Activated naive CD4-positive, alpha-beta T cell treated with anti-CD3 and anti-CD28 coated beads for 36 hours (primary cell): ENCODE measurements at regions of chr4 and their contacts with region 1.

Region 1: DNA sequence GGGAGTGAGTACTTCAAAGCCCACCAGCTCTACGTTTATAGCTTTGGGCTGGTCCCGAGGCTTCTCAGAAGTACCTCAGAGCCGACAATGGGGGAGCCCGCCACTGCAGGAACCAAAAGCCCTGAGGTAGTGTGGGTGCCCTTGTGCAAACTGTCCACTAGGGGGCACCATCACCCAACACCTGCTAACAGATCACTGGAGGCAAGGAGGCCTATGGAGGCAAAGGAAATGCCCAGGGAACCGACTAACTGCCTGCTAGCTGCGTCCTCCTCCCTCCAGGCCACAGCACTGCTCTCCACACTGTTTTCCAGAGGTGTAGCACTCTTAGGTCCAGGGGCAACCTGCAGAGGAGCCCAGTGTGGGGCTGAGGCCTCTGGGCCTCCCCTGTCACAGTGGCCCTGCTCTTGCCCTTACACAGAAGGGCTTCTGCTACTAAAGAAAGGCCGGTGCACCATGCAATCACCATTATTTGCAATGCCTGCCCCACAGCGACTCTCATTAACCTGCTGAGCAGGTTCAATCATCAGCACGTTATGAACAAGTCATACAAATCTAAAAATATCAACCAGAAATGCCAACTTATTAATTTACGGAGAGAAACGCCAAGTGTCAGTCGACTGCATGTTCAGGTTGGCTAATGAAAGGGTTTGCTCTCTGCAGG is 159.1 kb downstream of the NSUN7 start:
- DNase-seq: peak; percentile 89
- H3K4me3 Mint-ChIP-seq: peak overlapping the region; percentile 22
- H3K27ac Mint-ChIP-seq: peak overlapping the region; percentile 90
- H3K4me1 Mint-ChIP-seq: peaks cover 41% of the 10 kb centered on the region
- H3K27me3 Mint-ChIP-seq: no peaks in the 10 kb centered on the region

Region 2: DNA sequence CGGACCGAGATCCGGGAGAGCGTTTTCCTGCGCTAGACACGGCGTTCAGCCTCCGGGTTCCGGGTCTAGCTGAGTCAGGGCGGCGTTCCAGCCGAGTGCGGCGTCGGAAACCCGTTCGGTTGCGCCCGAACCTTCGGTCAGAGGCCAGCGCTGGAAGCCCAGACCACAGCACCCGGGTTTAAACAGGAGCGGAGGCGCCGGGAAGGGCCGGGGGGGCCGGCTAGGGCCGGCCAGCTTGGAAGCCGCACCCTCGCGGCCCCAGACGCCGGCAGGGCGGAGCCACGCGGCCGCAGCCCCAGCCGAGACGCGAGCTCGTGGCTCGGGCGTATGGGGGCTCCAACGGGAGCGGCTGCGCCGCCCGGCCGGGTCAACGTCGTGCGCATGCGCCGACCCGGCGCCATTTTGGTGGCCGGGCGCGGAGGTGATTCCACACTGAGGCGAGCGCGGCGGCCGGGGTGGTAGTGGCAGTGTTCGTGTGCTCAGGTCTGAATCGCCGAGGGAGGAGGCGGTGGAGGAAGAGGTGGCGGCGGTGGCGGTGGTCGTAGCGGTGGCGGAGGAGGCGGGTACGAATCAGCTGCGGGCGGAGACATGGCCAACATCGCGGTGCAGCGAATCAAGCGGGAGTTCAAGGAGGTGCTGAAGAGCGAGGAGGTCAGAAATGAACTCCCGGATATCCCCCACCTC is 1211.0 kb before region 1 on chr4 and contains the start of gene UBE2K:
- CTCF ChIA-PET with region 1: no interaction called
- intact Hi-C with region 1: loop called (anchors 2 kb)
- DNase-seq: peak; percentile 85
- H3K4me3 Mint-ChIP-seq: peak within 1 kb of the TSS; percentile 98
- H3K27ac Mint-ChIP-seq: peak within 1 kb of the TSS; percentile 98
- H3K4me1 Mint-ChIP-seq: peaks cover 32% of the 10 kb centered on the region
- H3K27me3 Mint-ChIP-seq: no peaks in the 10 kb centered on the region
- total RNA-seq, gene UBE2K: 60.6 to 69.5 TPM

Region 3: DNA sequence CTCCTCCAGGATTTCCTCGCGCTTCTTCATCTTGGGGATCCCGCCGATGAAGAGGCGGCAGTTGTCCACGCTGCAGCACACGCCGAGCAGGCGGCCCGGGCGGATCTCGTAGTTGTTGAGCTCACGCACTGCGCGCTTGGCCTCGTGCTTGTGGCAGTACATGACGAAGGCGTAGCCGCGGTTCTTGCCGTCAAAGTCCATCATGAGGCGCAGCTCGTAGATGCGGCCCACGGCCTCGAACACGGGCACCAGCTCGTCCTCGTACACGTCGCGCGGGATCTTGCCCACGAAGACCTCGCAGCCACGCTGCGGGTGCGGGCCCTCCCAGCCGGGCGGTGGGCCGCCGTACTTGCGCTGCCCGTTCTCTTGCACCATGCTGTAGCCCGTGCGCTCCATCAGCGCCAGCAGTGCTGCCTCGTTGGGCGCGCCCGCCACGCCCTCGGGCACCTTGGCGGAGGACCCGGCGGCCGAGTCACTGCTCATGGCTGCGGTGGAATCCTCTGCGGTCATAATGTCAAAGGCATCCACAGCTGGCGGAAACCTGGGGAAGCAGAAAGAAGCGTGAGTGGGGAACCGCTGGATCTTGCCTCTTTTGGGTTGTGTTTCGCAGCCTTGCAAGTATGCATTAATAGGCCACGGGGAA is 470.3 kb before region 1 on chr4:
- CTCF ChIA-PET with region 1: no interaction called
- intact Hi-C with region 1: loop called (anchors 1 kb)
- DNase-seq: no peak
- H3K4me3 Mint-ChIP-seq: no peak overlapping the region
- H3K27ac Mint-ChIP-seq: no peak overlapping the region
- H3K4me1 Mint-ChIP-seq: peaks cover 36% of the 10 kb centered on the region
- H3K27me3 Mint-ChIP-seq: no peaks in the 10 kb centered on the region

Region 4: GRCh38 chr4:40719008-40719623 is 189.7 kb before region 1 on chr4:
- CTCF ChIA-PET with region 1: no interaction called
- intact Hi-C with region 1: loop called (anchors 1 kb)
- DNase-seq: peak; percentile 27
- H3K4me3 Mint-ChIP-seq: no peak overlapping the region
- H3K27ac Mint-ChIP-seq: no peak overlapping the region
- H3K4me1 Mint-ChIP-seq: peaks cover 8% of the 10 kb centered on the region
- H3K27me3 Mint-ChIP-seq: no peaks in the 10 kb centered on the region

Region 5: GRCh38 chr4:40924096-40924792 is 15.4 kb after region 1 on chr4:
- CTCF ChIA-PET with region 1: interaction called, 102 read pairs
- intact Hi-C with region 1: loop called (anchors 1 kb)
- DNase-seq: peak; percentile 92
- H3K4me3 Mint-ChIP-seq: no peak overlapping the region
- H3K27ac Mint-ChIP-seq: peak overlapping the region; percentile 72
- H3K4me1 Mint-ChIP-seq: peaks cover 10% of the 10 kb centered on the region
- H3K27me3 Mint-ChIP-seq: peaks cover 11% of the 10 kb centered on the region

Region 6: DNA sequence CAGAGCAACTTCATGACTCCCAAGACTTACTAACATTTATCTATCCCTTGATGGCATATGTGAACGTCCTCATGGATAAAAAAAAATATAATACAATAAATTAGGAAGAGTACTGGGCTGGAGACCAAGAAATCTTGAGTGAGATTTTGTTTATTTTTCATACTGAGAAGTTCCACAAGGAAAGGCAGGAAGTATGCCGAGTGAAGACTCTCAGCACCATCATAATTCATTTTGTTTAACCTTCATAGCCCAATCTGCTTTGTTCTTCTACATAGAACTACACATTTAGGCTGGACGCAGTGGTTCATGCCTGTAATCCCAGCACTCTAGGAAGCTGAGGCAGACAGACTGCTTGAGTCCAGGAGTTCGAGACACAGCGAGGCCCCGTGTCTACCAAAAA is 39.2 kb after region 1 on chr4:
- CTCF ChIA-PET with region 1: no interaction called
- intact Hi-C with region 1: no loop called
- DNase-seq: no peak
- H3K4me3 Mint-ChIP-seq: no peak overlapping the region
- H3K27ac Mint-ChIP-seq: no peak overlapping the region
- H3K4me1 Mint-ChIP-seq: no peaks in the 10 kb centered on the region
- H3K27me3 Mint-ChIP-seq: no peaks in the 10 kb centered on the region

Region 7: DNA sequence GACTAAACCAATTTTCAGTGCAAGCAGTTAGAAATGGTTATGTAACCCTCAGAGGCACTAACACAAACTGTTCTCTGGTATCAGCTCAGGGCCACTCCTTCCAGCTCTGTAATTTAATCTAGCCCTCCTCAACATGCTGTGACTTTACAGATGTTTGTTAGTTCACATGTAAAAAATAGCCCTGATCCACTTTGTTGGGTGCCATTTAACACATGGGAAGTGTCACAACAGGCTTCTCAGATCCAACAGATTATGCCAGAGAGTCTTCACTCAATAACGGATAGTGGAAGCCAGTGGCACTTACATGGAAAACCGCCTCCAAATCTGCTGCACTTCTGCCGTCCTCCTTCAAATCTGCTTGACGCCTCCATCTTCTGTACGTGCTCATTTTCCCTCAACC is 1696.4 kb after region 1 on chr4:
- CTCF ChIA-PET with region 1: no interaction called
- intact Hi-C with region 1: no loop called
- DNase-seq: no peak
- H3K4me3 Mint-ChIP-seq: no peak overlapping the region
- H3K27ac Mint-ChIP-seq: no peak overlapping the region
- H3K4me1 Mint-ChIP-seq: peaks cover 11% of the 10 kb centered on the region
- H3K27me3 Mint-ChIP-seq: no peaks in the 10 kb centered on the region

Region 8: DNA sequence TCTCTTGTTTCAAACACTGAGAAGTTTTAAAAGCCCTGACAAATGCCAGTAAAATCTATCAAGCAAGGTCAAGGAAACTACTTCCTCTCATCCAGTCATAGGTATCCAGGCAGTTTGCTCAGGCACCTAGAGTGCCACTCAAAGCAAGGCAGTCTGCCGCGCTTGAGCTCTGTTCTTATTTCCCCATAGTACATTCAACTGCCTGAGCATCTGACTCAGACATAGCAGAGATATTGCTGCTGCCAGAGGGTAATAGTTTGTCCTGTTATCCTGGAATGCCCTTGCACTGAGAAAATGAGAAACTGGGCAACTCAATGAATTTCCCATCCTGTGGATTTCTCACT is 1764.2 kb after region 1 on chr4:
- CTCF ChIA-PET with region 1: no interaction called
- intact Hi-C with region 1: loop called (anchors 5 kb)
- DNase-seq: peak; percentile 68
- H3K4me3 Mint-ChIP-seq: peak overlapping the region; percentile 49
- H3K27ac Mint-ChIP-seq: peak overlapping the region; percentile 94
- H3K4me1 Mint-ChIP-seq: peaks cover 70% of the 10 kb centered on the region
- H3K27me3 Mint-ChIP-seq: no peaks in the 10 kb centered on the region